ENCODE measurements at regions of chr2 and their contacts with region 1.

Region 1: DNA sequence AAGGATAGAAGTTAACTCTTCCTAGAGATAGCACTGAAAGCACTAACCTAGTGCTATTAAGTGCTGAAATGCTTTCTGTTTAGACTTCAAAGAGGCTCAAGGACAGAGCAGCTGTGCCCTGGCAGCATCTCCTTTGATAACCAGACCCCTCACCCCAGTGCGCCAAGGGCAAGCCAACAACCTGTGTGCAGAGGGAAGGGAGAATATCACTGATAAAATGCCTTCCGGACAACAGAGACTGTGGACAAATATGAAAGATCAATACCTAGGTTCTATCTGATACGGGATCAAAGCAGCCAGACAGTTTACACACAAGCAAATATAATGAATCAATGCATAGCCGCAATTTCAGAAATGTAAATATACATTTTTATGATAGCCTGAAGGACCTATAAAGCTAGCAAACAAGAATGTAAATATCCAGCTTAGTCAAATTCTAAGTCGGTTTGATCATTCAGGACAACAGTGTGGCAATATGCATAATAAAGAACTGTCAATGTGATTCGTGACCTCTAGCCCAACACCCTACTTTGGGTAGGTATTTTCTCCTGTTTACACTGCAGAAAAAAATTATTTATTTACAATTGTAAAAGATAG is 91.8 kb upstream of the RFX8 start:
- DNase-seq: peak; percentile 100
- ATAC-seq: peak; percentile 97
- H3K4me3 ChIP-seq: peak overlapping the region in 1 of 3 experiments; percentile 19; a peak in 1 of 6 replicates
- H3K27ac ChIP-seq: peak overlapping the region; percentile 67
- H3K4me1 ChIP-seq: peaks cover 82% of the 10 kb centered on the region
- H3K27me3 ChIP-seq: no peaks in the 10 kb centered on the region
- CTCF ChIP-seq: peak; percentile 1; the same call in 1 of the 2 replicates
- EP300 ChIP-seq: peak; percentile 98 to 100
- POLR2A ChIP-seq: no peak
- RAD21 ChIP-seq: peak; percentile 32

Region 2: DNA sequence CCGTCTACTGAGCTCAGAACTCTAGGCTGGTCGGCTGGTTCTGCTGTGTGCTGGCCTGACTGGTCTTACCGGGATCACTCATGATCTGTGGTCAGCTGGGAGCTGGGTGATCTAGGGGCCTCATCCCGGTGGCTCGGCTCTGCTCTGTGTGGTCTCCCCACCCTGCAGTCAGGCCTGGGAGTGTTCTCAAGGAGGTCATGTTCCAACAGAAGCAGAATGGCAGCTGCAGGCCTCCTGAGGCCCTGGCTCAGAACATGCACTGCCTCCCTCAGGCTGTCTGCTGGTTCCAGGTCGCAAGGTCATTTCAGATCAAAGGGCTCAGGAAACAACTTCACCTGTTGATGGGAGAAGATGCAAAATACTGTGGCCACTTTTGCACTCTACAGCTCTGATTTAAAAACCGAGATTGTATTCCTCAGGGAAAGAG is 10.7 kb before region 1 on chr2:
- CTCF ChIA-PET with region 1: interaction called, 4 read pairs
- POLR2A ChIA-PET with region 1: interaction called, 19 read pairs
- in situ Hi-C with region 1: no loop called
- intact Hi-C with region 1: loop called (anchors 1 kb)
- DNase-seq: peak; percentile 77
- ATAC-seq: peak; percentile 85
- H3K4me3 ChIP-seq: peak overlapping the region in 1 of 3 experiments; percentile 49; a peak in 2 of 6 replicates
- H3K27ac ChIP-seq: no peak overlapping the region
- H3K4me1 ChIP-seq: peaks cover 78% of the 10 kb centered on the region
- H3K27me3 ChIP-seq: no peaks in the 10 kb centered on the region
- CTCF ChIP-seq: peak; percentile 68
- EP300 ChIP-seq: 0 out of 4 replicates have a peak, but pooled peaks of 1 of the 2 experiments have one; percentile 38
- POLR2A ChIP-seq: no peak
- RAD21 ChIP-seq: peak; percentile 22; the same call in 1 of the 2 replicates

Region 3: DNA sequence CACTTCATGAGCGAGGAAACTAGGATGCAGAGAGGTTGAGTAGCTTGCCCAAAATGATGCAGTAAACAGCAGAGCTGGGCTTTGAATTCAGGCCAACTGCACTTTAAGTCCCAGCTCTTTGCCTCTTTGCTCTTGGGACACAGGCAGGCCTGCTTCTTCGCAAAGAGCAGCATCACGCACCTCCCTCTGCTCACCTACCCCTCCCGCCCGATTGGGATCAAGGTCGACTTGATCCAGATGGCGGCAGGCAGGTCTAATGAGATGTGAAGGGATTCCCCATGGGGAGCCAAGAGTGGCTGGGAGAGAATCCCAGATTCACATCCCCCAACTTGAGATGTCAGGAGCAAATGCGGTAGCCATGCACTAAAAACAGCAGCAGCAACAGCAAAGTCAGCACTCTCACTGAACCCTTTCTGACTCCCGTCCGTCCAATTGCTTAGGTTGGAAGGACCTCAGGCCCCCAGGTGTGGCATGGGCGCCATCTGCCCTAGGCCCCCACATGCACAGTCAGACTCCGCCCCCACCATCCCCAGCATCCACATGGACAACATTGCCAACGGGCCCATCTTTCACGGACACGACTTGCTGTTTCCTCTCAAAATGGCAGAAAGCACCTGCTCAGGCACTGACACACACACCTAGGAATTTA is 46.5 kb after region 1 on chr2:
- CTCF ChIA-PET with region 1: no interaction called
- POLR2A ChIA-PET with region 1: interaction called, 9 read pairs
- in situ Hi-C with region 1: no loop called
- intact Hi-C with region 1: loop called (anchors 5 kb)
- DNase-seq: peak; percentile 29
- ATAC-seq: peak; percentile 15; the same call in 1 of the 3 replicates
- H3K4me3 ChIP-seq: no peak overlapping the region
- H3K27ac ChIP-seq: no peak overlapping the region
- H3K4me1 ChIP-seq: peaks cover 58% of the 10 kb centered on the region
- H3K27me3 ChIP-seq: no peaks in the 10 kb centered on the region
- CTCF ChIP-seq: 0 out of 2 replicates have a peak, but pooled peaks have one; percentile 10
- EP300 ChIP-seq: no peak
- POLR2A ChIP-seq: no peak
- RAD21 ChIP-seq: no peak

Region 4: DNA sequence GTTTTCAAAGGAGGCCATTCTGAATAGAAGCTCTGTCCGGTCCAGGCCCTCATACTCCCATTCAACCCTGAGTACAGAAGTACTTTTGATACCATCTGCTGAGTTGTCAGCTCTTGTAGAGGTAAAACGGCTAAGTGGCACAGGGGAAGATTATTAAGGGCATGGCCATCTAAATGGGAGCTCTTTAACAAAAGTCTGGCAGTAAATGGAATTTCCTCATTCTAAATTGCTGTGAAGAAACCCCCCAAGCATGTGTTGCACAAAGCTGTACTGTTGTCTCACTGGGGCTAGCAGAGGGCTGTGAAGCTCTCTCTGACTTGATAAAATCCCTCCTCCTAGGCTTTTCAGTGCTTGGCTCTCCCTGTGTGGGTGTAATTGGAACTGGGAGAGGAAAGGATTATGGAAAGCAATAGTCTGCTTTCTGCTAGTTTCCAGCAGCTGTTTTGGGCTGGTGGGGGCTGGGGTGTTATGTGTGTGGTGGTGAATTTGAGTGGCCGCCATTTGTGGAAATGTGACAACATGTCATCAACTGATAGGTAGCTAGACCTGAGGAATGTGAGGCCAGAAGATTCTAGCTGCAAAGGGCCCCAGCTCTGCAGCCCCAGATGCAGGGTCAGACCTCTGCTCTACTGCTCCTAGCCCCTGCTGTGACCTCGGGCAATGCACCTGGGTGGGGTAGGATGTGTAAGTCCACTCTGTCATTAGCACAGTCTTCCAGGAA is 195.9 kb after region 1 on chr2:
- CTCF ChIA-PET with region 1: no interaction called
- POLR2A ChIA-PET with region 1: interaction called, 16 read pairs
- in situ Hi-C with region 1: no loop called
- intact Hi-C with region 1: loop called (anchors 1 kb)
- DNase-seq: no peak
- ATAC-seq: peak; percentile 23
- H3K4me3 ChIP-seq: peak overlapping the region in 1 of 3 experiments; percentile 11; a peak in 1 of 6 replicates
- H3K27ac ChIP-seq: peak overlapping the region; percentile 44
- H3K4me1 ChIP-seq: peaks cover 87% of the 10 kb centered on the region
- H3K27me3 ChIP-seq: no peaks in the 10 kb centered on the region
- CTCF ChIP-seq: no peak
- EP300 ChIP-seq: no peak
- POLR2A ChIP-seq: 0 out of 4 replicates have a peak, but pooled peaks of 1 of the 2 experiments have one; percentile 3
- RAD21 ChIP-seq: no peak

Region 5: GRCh38 chr2:101831351-101831865 is 264.7 kb after region 1 on chr2:
- CTCF ChIA-PET with region 1: no interaction called
- POLR2A ChIA-PET with region 1: no interaction called
- in situ Hi-C with region 1: no loop called
- intact Hi-C with region 1: loop called (anchors 1 kb)
- DNase-seq: peak; percentile 77
- ATAC-seq: peak; percentile 92
- H3K4me3 ChIP-seq: no peak overlapping the region
- H3K27ac ChIP-seq: peak overlapping the region; percentile 3
- H3K4me1 ChIP-seq: peaks cover 50% of the 10 kb centered on the region
- H3K27me3 ChIP-seq: no peaks in the 10 kb centered on the region
- CTCF ChIP-seq: peak; percentile 87
- EP300 ChIP-seq: no peak
- POLR2A ChIP-seq: no peak
- RAD21 ChIP-seq: peak; percentile 71

Measured in HepG2 (cell line).